Dorsolateral prefrontal cortex (tissue), 120 donors: ENCODE measurements at regions of chr10 and their contacts with region 1.

Region 1: DNA sequence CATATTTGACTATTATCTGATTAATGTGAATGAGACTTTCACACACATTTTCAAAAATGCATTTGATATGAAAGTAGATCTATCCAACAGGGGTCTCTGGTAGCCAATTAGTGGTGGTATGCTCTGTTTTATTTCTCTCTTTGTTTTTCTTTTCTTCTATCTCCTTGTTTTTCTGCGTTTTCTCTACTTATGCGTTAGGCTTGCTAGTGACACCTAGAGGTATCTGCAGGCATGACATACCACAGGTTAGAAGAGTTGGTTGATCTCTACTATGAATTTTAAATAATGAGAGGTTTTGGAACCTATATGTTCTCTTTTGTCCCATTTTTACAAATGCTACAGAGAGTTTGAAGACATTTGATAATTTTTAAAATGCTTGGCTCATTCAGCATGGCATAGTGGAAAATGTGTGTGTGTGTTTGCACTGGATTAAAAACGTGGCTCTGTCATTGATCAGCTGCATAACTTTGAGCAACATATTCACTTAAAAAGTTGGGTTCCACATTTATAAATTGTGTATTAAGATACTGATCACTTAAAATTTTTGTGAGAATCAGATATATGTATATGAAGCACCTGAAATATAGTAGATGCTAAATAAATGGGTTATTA is 28.1 kb upstream of the PLXDC2 start:
- DNase-seq: peak in 1 of 10 donors; percentile 16
- H3K4me3 ChIP-seq: no peak overlapping the region
- H3K27ac ChIP-seq: no peak overlapping the region
- H3K27me3 ChIP-seq: peaks cover 0 to 6% (median 0%) of the 10 kb centered on the region in 45 donors
- CTCF ChIP-seq: peak; percentile 19 to 82 (median 68)

Region 2: GRCh38 chr10:19719284-19719683 is 68.9 kb before region 1 on chr10:
- intact Hi-C with region 1: loop called (anchors 10 kb)
- DNase-seq: no peak
- H3K4me3 ChIP-seq: peak overlapping the region in 4 of 59 donors; percentile 2 to 17 (median 6)
- H3K27ac ChIP-seq: no peak overlapping the region
- H3K27me3 ChIP-seq: no peaks in the 10 kb centered on the region
- CTCF ChIP-seq: no peak